CD8-positive, alpha-beta T cell (primary cell): ENCODE measurements at regions of chr7 and their contacts with region 1.

Region 1: GRCh38 chr7:141785706-141786552 is 4.1 kb upstream of the TAS2R5 start:
- DNase-seq: peak in 6 of 9 experiments; percentile 4 to 61 (median 24)
- ATAC-seq: no peak
- H3K4me3 ChIP-seq: no peak overlapping the region
- H3K4me3 Mint-ChIP-seq: no peak overlapping the region
- H3K27ac ChIP-seq: no peak overlapping the region
- H3K27ac Mint-ChIP-seq: no peak overlapping the region
- H3K4me1 ChIP-seq: no peaks in the 10 kb centered on the region
- H3K4me1 Mint-ChIP-seq: no peaks in the 10 kb centered on the region
- H3K27me3 ChIP-seq: no peaks in the 10 kb centered on the region
- H3K27me3 Mint-ChIP-seq: no peaks in the 10 kb centered on the region
- CTCF ChIP-seq: peak; percentile 85

Region 2: DNA sequence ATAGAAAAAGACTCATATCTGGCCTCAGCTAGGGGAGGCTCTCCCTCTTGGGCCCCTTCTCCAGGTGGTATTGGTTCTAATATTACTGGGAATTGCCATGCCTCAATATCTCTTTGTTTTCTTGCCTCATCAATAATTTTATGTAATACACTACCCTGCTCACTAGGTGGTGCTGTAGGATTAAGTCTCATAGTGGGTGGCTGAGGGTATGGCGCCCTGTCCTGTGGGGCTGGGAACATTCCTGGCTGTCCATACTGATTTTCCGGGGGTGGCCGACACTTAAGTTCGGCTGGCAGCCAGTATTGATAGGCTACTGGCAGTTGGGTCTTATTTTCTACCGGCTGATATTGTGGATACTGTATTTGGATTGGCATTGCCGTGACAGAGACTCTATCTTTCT is 31.0 kb before region 1 on chr7:
- CTCF ChIA-PET with region 1: interaction called, 3 read pairs
- POLR2A ChIA-PET with region 1: no interaction called
- intact Hi-C with region 1: loop called in 1 of 2 experiments (anchors 1 kb)
- DNase-seq: peak in 2 of 9 experiments; percentile 32 to 41
- ATAC-seq: peak; percentile 44
- H3K4me3 ChIP-seq: no peak overlapping the region
- H3K4me3 Mint-ChIP-seq: no peak overlapping the region
- H3K27ac ChIP-seq: no peak overlapping the region
- H3K27ac Mint-ChIP-seq: no peak overlapping the region
- H3K4me1 ChIP-seq: no peaks in the 10 kb centered on the region
- H3K4me1 Mint-ChIP-seq: no peaks in the 10 kb centered on the region
- H3K27me3 ChIP-seq: no peaks in the 10 kb centered on the region
- H3K27me3 Mint-ChIP-seq: no peaks in the 10 kb centered on the region
- CTCF ChIP-seq: peak; percentile 32

Region 3: DNA sequence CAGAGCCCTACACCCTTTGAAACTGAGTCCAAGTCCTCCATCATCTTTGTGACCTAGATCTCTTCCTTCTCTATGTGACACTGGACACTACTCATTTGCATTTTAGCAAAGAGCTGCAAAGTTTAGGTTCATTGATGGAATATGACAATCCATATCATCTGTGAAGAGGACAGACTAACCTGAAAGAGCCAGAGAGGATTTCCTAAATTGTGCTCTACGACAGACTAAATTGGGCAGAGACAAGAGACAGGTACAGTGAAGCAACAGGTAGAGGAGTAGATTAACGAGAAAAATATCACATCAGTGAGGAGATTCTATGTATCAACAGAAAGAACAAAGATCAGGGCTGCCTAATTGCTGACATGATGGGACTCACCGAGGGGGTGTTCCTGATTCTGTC is 22.1 kb before region 1 on chr7 and contains the start of gene TAS2R3:
- CTCF ChIA-PET with region 1: interaction called, 17 read pairs
- POLR2A ChIA-PET with region 1: no interaction called
- intact Hi-C with region 1: no loop called
- DNase-seq: no peak
- ATAC-seq: no peak
- H3K4me3 ChIP-seq: no peak within 1 kb of the TSS
- H3K4me3 Mint-ChIP-seq: no peak within 1 kb of the TSS
- H3K27ac ChIP-seq: no peak within 1 kb of the TSS
- H3K27ac Mint-ChIP-seq: no peak within 1 kb of the TSS
- H3K4me1 ChIP-seq: no peaks in the 10 kb centered on the region
- H3K4me1 Mint-ChIP-seq: peaks cover 6% of the 10 kb centered on the region
- H3K27me3 ChIP-seq: no peaks in the 10 kb centered on the region
- H3K27me3 Mint-ChIP-seq: no peaks in the 10 kb centered on the region
- CTCF ChIP-seq: no peak
- total RNA-seq, gene TAS2R3: not detected